ENCODE measurements at regions of chr15 and their contacts with region 1.

Region 1: DNA sequence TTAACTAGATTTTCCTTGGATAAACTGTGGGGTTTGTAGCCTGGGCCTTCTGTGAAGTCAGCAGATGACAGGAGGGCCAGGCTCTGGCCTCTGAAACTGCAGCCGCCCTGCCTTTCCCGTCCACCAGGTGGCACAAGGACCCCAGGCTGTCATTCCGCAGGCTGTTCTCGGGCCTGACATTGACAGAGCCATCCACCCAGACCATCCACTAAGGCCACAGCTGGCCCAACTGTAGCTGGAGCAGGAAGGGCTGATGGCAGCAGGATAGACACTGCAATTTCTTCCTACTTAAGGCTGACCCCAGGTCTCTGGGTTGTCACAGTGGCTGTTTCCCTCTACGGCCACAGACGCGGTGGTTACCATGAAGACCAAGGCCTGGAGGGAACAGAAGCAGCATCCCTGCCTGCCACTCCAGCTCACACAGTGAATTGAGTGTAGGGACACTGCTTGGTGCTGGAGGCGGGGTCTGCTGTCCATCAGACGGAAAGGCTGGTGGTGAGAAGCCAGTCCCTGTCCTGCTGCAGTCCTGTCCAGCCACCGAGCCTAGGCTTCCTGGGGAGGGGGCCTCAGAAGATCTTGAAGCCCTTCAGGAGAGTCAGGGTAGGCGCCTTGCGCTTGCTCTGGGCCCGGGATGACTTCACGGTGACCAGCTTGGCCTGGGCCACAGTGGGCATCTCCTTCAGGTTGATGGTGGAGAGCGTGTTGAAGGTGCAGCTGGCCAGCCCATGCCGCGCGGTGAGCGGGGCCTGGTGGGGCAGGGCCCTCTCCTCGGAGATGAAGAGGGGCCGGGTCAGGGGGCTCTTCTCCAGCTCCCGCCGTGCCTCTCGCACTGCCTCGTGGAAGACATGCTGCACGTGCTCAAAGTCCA is 9.4 kb downstream of the SLC51B start:
- DNase-seq: peak in 1 of 2 donors; percentile 81
- H3K4me3 ChIP-seq: no peak overlapping the region
- H3K27ac ChIP-seq: peak overlapping the region; percentile 97
- H3K4me1 ChIP-seq: peaks cover 13 to 52% of the 10 kb centered on the region in 2 donors
- H3K27me3 ChIP-seq: no peaks in the 10 kb centered on the region
- CTCF ChIP-seq: peak; percentile 80 to 89 (median 87)

Region 2: DNA sequence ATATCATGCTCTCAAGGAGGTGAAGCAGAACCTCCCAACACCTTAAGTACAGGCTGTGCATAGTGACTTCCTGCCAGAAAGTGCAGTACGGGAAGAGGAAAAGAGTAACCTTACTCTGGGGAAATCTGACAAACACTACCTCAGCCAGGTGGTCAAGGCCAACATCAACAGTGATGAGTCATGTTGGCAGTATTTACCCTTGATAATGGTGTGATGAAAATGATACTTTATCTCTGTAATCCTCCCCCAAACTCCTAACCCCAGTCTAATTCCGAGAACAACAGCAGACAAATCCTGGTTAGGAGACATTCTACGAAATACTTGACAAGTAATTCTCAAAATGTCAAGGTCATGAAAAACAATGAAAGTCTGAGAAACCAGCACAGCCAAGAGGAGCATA is 116.4 kb before region 1 on chr15:
- intact Hi-C with region 1: no loop called
- DNase-seq: peak in 1 of 2 donors; percentile 56
- H3K4me3 ChIP-seq: no peak overlapping the region
- H3K27ac ChIP-seq: no peak overlapping the region
- H3K4me1 ChIP-seq: no peaks in the 10 kb centered on the region
- H3K27me3 ChIP-seq: no peaks in the 10 kb centered on the region
- CTCF ChIP-seq: no peak

Region 3: DNA sequence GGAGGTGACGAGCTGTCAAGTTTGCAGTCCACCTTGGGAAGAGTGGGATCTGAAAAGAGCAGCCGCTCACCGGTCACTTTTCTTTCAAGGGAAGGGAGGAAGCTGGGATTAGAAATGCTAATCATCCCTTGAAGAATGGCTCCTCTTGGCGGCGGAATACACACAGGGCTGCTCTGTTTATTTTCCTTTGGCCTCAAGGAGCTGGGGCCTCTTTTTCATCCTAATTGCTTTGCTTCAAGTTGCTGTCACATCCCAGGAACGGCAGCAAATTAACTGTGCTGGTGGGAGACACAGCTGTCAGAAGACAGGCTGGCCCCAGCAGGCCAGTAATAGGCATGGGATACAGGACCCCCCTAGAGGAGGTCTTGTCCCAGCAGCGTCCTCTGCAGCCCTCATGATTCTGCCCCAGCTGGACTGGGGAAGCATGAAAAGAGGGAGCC is 28.7 kb after region 1 on chr15:
- intact Hi-C with region 1: loop called (anchors 1 kb)
- DNase-seq: no peak
- H3K4me3 ChIP-seq: no peak overlapping the region
- H3K27ac ChIP-seq: peak overlapping the region; percentile 96 to 98
- H3K4me1 ChIP-seq: peaks cover 46 to 67% of the 10 kb centered on the region in 2 donors
- H3K27me3 ChIP-seq: no peaks in the 10 kb centered on the region
- CTCF ChIP-seq: peak in 2 of 3 experiments; percentile 36 to 56

Region 4: DNA sequence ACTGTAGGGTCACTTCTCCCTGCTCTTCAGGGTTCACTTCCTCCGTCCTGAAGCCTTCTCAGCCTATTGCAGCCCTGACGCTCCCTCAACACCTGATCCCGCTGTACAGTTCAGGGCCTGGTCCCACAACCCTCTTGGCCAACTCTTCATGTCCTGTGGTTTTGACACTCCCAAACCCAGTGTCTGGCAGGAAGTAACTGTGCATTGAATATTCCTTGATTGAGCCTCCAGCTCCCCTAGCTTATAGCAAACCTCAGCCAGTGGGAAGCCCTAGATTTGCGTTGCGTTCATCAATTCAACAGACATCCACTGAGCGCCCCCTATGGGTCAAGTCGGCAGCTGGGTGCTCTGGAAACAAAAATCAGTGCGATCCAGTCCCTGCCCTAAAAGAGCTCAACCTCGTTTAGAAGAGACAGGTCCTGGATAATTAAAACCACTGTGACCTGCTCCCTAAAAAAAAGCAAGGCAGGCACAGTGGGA is 46.9 kb after region 1 on chr15:
- intact Hi-C with region 1: loop called (anchors 1 kb)
- DNase-seq: peak in 1 of 2 donors; percentile 88
- H3K4me3 ChIP-seq: no peak overlapping the region
- H3K27ac ChIP-seq: no peak overlapping the region
- H3K4me1 ChIP-seq: peaks cover 4 to 8% of the 10 kb centered on the region in 2 donors
- H3K27me3 ChIP-seq: no peaks in the 10 kb centered on the region
- CTCF ChIP-seq: peak; percentile 76 to 91 (median 90)

Region 5: GRCh38 chr15:65133548-65134200 is 79.1 kb after region 1 on chr15 and contains the start of gene PDCD7:
- intact Hi-C with region 1: loop called (anchors 2 kb)
- DNase-seq: peak; percentile 44 to 92
- H3K4me3 ChIP-seq: peak within 1 kb of the TSS; percentile 75 to 87
- H3K27ac ChIP-seq: peak within 1 kb of the TSS; percentile 83 to 88
- H3K4me1 ChIP-seq: peaks cover 0 to 19% of the 10 kb centered on the region in 2 donors
- H3K27me3 ChIP-seq: no peaks in the 10 kb centered on the region
- CTCF ChIP-seq: no peak
- total RNA-seq, gene PDCD7: 9.2 TPM

Region 6: DNA sequence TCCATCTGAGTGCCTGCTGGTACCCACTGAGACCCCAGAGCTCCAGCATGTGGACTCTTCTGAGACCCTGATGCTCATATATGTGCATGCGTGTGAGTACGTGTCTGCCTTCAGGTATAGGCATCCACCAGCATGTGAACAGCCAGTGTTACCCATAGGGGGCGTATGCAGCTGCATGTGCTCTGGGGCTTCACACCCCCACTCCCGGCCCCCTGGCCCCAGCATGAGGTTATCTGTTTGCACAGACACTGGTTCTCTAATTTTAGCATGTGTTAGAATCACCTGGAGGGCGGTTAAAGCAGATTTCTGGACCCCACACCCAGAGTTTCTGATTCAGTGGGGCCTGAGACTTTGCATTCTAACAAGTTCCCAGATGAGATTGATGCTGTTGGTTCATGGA is 157.5 kb after region 1 on chr15:
- intact Hi-C with region 1: no loop called
- DNase-seq: no peak
- H3K4me3 ChIP-seq: no peak overlapping the region
- H3K27ac ChIP-seq: no peak overlapping the region
- H3K4me1 ChIP-seq: no peaks in the 10 kb centered on the region
- H3K27me3 ChIP-seq: no peaks in the 10 kb centered on the region
- CTCF ChIP-seq: no peak